ENCODE measurements at regions of chr11 and their contacts with region 1.

Region 1: GRCh38 chr11:29260939-29261705 is 755.7 kb downstream of the KCNA4 start:
- DNase-seq: no peak
- ATAC-seq: peak; percentile 58
- H3K4me3 ChIP-seq: no peak overlapping the region
- H3K27ac ChIP-seq: no peak overlapping the region
- H3K4me1 ChIP-seq: no peaks in the 10 kb centered on the region
- H3K27me3 ChIP-seq: 0 out of 4 replicates have a peak, but pooled peaks cover 0 to 2% of the 10 kb centered on the region in 2 experiments
- CTCF ChIP-seq: 0 out of 6 replicates have a peak, but pooled peaks of 1 of the 3 experiments have one; percentile 6
- EP300 ChIP-seq: no peak
- POLR2A ChIP-seq: no peak
- RAD21 ChIP-seq: no peak

Region 2: DNA sequence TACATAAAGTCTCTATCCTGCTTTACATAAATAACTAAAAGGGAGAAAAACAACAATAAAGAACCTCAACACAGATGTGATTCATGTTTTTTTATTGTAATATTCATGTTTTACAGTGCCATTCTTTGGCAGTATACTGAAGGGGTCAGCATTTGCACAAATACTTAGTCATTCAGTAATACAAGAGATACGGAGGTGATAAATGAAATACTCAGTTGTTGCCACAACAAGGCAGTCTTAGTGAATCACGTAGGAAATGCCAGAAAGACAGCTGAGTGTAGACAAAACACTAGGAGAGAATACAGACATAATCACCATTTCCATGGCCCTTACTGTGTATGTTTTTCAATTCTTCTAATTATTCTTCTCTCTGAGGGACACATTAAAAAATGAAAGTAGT is 242.5 kb before region 1 on chr11:
- CTCF ChIA-PET with region 1: no interaction called
- POLR2A ChIA-PET with region 1: no interaction called
- RAD21 ChIA-PET with region 1: no interaction called
- SMC1A ChIA-PET with region 1: no interaction called
- in situ Hi-C with region 1: no loop called
- intact Hi-C with region 1: no loop called
- DNase-seq: no peak
- ATAC-seq: no peak
- H3K4me3 ChIP-seq: no peak overlapping the region
- H3K27ac ChIP-seq: no peak overlapping the region
- H3K4me1 ChIP-seq: no peaks in the 10 kb centered on the region
- H3K27me3 ChIP-seq: no peaks in the 10 kb centered on the region
- CTCF ChIP-seq: no peak
- EP300 ChIP-seq: no peak
- POLR2A ChIP-seq: no peak
- RAD21 ChIP-seq: no peak

Region 3: DNA sequence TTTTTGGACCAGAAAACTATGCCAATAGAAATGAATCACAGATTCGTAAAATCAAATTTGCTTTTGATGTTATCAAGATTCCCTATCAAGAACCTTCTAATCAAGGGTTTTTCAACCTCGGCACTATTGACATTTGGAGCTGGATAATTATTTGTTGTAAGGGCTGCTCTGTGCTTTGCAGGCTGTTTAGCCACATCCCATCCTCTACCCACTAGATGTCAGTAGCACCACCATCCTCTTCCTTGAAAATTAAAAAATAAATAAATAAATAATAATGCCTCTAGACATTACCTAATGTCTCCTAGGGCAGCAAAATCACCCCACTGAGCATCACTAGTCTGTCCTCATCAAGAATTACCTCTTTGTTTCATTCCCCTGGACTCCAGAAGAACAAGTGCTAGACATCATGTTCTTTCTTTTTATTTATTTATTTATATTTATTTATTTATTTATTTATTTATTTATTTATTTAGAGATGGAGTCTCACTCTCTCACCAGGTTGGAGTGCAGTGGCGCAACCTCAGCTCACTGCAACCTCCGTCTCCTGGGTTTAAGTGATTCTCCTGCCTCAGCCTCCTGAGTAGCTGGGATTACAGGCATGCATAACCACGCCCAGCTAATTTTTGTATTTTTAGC is 11.0 kb after region 1 on chr11:
- CTCF ChIA-PET with region 1: interaction called, 15 read pairs
- POLR2A ChIA-PET with region 1: no interaction called
- RAD21 ChIA-PET with region 1: no interaction called
- SMC1A ChIA-PET with region 1: interaction called, 7 read pairs
- in situ Hi-C with region 1: no loop called
- intact Hi-C with region 1: no loop called
- DNase-seq: no peak
- ATAC-seq: peak; percentile 75
- H3K4me3 ChIP-seq: no peak overlapping the region
- H3K27ac ChIP-seq: no peak overlapping the region
- H3K4me1 ChIP-seq: no peaks in the 10 kb centered on the region
- H3K27me3 ChIP-seq: no peaks in the 10 kb centered on the region
- CTCF ChIP-seq: peak in 2 of 3 experiments; percentile 9 to 31; a peak in 1 of 6 replicates
- EP300 ChIP-seq: no peak
- POLR2A ChIP-seq: no peak
- RAD21 ChIP-seq: 0 out of 2 replicates have a peak, but pooled peaks have one; percentile 17

Region 4: GRCh38 chr11:29282088-29282487 is 21.0 kb after region 1 on chr11:
- CTCF ChIA-PET with region 1: interaction called, 3 read pairs
- POLR2A ChIA-PET with region 1: interaction called, 3 read pairs
- RAD21 ChIA-PET with region 1: interaction called, 11 read pairs
- SMC1A ChIA-PET with region 1: interaction called, 15 read pairs
- in situ Hi-C with region 1: no loop called
- intact Hi-C with region 1: no loop called
- DNase-seq: no peak
- ATAC-seq: peak; percentile 59
- H3K4me3 ChIP-seq: no peak overlapping the region
- H3K27ac ChIP-seq: no peak overlapping the region
- H3K4me1 ChIP-seq: no peaks in the 10 kb centered on the region
- H3K27me3 ChIP-seq: no peaks in the 10 kb centered on the region
- CTCF ChIP-seq: no peak
- EP300 ChIP-seq: no peak
- POLR2A ChIP-seq: no peak
- RAD21 ChIP-seq: no peak

Region 5: GRCh38 chr11:29293825-29294224 is 32.7 kb after region 1 on chr11:
- CTCF ChIA-PET with region 1: interaction called, 3 read pairs
- POLR2A ChIA-PET with region 1: no interaction called
- RAD21 ChIA-PET with region 1: interaction called, 6 read pairs
- SMC1A ChIA-PET with region 1: interaction called, 33 read pairs
- in situ Hi-C with region 1: no loop called
- intact Hi-C with region 1: no loop called
- DNase-seq: peak; percentile 45
- ATAC-seq: peak; percentile 96
- H3K4me3 ChIP-seq: no peak overlapping the region
- H3K27ac ChIP-seq: no peak overlapping the region
- H3K4me1 ChIP-seq: no peaks in the 10 kb centered on the region
- H3K27me3 ChIP-seq: no peaks in the 10 kb centered on the region
- CTCF ChIP-seq: no peak
- EP300 ChIP-seq: peak; percentile 98 to 99
- POLR2A ChIP-seq: no peak
- RAD21 ChIP-seq: no peak

Measured in GM12878 (cell line).